ENCODE measurements at regions of chr1 and their contacts with region 1.

Region 1: GRCh38 chr1:159798893-159799292 is 3.3 kb upstream of the FCRL6 start:
- DNase-seq: peak; percentile 90
- ATAC-seq: peak; percentile 97
- H3K4me3 ChIP-seq: no peak overlapping the region
- H3K27ac ChIP-seq: no peak overlapping the region
- H3K4me1 ChIP-seq: no peaks in the 10 kb centered on the region
- H3K27me3 ChIP-seq: peaks cover 24% of the 10 kb centered on the region
- CTCF ChIP-seq: peak; percentile 83 to 99 (median 91)
- POLR2A ChIP-seq: no peak
- RAD21 ChIP-seq: peak; percentile 96

Region 2: GRCh38 chr1:159161001-159161718 is 637.7 kb before region 1 on chr1:
- CTCF ChIA-PET with region 1: no interaction called
- POLR2A ChIA-PET with region 1: no interaction called
- RAD21 ChIA-PET with region 1: no interaction called
- intact Hi-C with region 1: loop called (anchors 1 kb)
- DNase-seq: peak; percentile 50
- ATAC-seq: peak; percentile 95
- H3K4me3 ChIP-seq: no peak overlapping the region
- H3K27ac ChIP-seq: no peak overlapping the region
- H3K4me1 ChIP-seq: no peaks in the 10 kb centered on the region
- H3K27me3 ChIP-seq: peaks cover 11% of the 10 kb centered on the region
- CTCF ChIP-seq: peak; percentile 87 to 99 (median 95)
- POLR2A ChIP-seq: no peak
- RAD21 ChIP-seq: peak; percentile 91

Region 3: GRCh38 chr1:159429074-159429861 is 369.6 kb before region 1 on chr1:
- CTCF ChIA-PET with region 1: no interaction called
- POLR2A ChIA-PET with region 1: no interaction called
- RAD21 ChIA-PET with region 1: no interaction called
- intact Hi-C with region 1: loop called (anchors 10 kb)
- DNase-seq: no peak
- ATAC-seq: no peak
- H3K4me3 ChIP-seq: no peak overlapping the region
- H3K27ac ChIP-seq: no peak overlapping the region
- H3K4me1 ChIP-seq: no peaks in the 10 kb centered on the region
- H3K27me3 ChIP-seq: peaks cover 21% of the 10 kb centered on the region
- CTCF ChIP-seq: no peak
- POLR2A ChIP-seq: no peak
- RAD21 ChIP-seq: no peak

Region 4: DNA sequence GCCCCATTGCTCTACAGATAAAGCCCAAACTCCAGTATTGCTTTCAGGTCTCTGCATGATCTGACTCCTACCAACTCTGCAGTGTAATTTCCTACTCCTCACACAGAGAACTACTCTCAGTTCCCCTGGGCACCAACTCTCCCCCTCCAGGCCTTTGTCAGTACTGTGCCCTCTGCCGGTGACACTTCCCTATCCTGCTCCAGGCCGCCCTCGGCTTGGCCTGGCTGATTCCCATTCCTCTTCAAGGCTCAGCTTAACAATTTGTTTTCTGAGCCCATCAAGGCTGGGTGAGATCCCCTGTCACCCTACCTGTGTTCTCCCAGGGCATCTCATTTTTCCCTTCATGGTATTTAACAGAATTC is 30.4 kb after region 1 on chr1:
- CTCF ChIA-PET with region 1: interaction called, 20 read pairs
- POLR2A ChIA-PET with region 1: no interaction called
- RAD21 ChIA-PET with region 1: no interaction called
- intact Hi-C with region 1: no loop called
- DNase-seq: peak; percentile 29
- ATAC-seq: peak; percentile 100
- H3K4me3 ChIP-seq: no peak overlapping the region
- H3K27ac ChIP-seq: no peak overlapping the region
- H3K4me1 ChIP-seq: peaks cover 0 to 7% of the 10 kb centered on the region in 2 experiments; a peak in 1 of 4 replicates
- H3K27me3 ChIP-seq: peaks cover 4% of the 10 kb centered on the region; the same call in 1 of the 2 replicates
- CTCF ChIP-seq: peak; percentile 69 to 76 (median 76); a peak in 5 of 6 replicates
- POLR2A ChIP-seq: no peak
- RAD21 ChIP-seq: peak; percentile 50

Region 5: DNA sequence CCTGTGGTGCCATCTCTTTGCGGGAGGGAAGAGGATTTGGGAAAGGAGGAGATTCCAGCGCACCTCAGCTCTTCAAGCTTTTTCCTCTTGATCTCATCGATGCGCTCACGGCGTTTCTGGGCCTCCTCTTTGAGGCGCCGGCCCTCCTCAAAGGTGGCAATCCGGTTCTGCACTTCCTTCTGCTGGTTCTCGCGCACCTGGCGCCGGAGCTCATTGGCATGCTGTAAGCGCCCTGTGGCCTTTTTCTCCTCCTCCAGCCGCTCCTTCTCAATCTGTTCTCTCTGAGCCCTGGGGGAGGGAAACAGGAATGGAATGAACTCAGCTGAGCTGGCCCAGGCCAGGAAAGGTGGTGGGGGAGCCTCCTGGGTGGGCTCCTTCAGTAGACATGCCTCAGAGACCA is 74.0 kb after region 1 on chr1:
- CTCF ChIA-PET with region 1: interaction called, 10 read pairs
- POLR2A ChIA-PET with region 1: no interaction called
- RAD21 ChIA-PET with region 1: no interaction called
- intact Hi-C with region 1: no loop called
- DNase-seq: no peak
- ATAC-seq: no peak
- H3K4me3 ChIP-seq: no peak overlapping the region
- H3K27ac ChIP-seq: no peak overlapping the region
- H3K4me1 ChIP-seq: peaks cover 22 to 37% of the 10 kb centered on the region in 2 experiments
- H3K27me3 ChIP-seq: no peaks in the 10 kb centered on the region
- CTCF ChIP-seq: no peak
- POLR2A ChIP-seq: no peak
- RAD21 ChIP-seq: no peak

Measured in HCT116 (cell line).